Dendritic cell treated with granulocyte-macrophage colony-stimulating factor and Interleukin-4, amounts not matched to agents 40 ng/mL and 50 ng/mL, for 4 days (primary cell): ENCODE measurements at regions of chr2 and their contacts with region 1.

Region 1: GRCh38 chr2:229330952-229331351 is 59.9 kb upstream of the PID1 start:
- H3K4me3 Mint-ChIP-seq: peak overlapping the region; percentile 17
- H3K27ac Mint-ChIP-seq: peak overlapping the region; percentile 65
- H3K4me1 Mint-ChIP-seq: peaks cover 51% of the 10 kb centered on the region
- H3K27me3 Mint-ChIP-seq: peaks cover 18% of the 10 kb centered on the region

Region 2: GRCh38 chr2:229275506-229275905 is 55.4 kb before region 1 on chr2:
- intact Hi-C with region 1: loop called (anchors 5 kb)
- H3K4me3 Mint-ChIP-seq: no peak overlapping the region
- H3K27ac Mint-ChIP-seq: no peak overlapping the region
- H3K4me1 Mint-ChIP-seq: peaks cover 34% of the 10 kb centered on the region
- H3K27me3 Mint-ChIP-seq: peaks cover 44% of the 10 kb centered on the region

Region 3: DNA sequence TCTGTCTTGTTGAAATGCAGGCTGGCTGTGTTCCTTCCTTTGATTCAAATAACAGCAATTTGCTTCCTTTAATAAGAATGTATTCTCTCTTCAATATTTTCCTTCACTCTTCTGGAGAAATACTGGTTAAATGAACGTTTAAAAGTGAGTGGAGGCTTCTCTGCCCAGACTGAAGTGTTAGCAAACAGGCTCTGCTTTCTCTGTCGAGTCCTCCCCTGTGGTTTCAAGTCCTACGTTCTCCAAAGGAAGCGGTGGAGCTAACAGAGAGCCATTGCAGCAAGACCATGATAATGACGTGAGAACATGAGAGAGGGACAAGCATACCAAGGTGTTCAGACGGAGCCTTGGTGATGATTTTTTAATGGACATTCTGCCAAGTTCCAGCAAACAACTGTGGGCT is 33.7 kb before region 1 on chr2:
- intact Hi-C with region 1: loop called (anchors 5 kb)
- H3K4me3 Mint-ChIP-seq: no peak overlapping the region
- H3K27ac Mint-ChIP-seq: no peak overlapping the region
- H3K4me1 Mint-ChIP-seq: peaks cover 51% of the 10 kb centered on the region
- H3K27me3 Mint-ChIP-seq: peaks cover 11% of the 10 kb centered on the region

Region 4: DNA sequence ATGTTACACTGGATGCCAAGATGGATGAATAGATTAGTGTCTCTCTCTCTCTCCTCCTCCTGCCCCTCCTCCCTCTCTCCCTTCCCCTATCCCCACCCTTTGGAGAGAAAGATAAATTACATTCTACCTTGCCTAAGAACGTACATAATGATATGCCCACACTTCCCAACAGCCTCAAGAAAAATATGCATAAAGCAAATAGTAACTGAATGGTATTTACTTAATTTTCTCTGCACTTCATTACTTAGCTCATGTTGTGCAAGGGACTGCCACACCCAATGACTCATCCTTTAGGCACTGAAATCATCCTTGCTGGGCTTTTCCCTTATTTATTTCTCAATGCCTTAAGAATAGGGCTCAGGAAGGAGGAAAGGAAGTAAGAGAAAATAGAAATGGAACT is 77.4 kb after region 1 on chr2:
- intact Hi-C with region 1: loop called (anchors 2 kb)
- H3K4me3 Mint-ChIP-seq: no peak overlapping the region
- H3K27ac Mint-ChIP-seq: peak overlapping the region; percentile 78
- H3K4me1 Mint-ChIP-seq: peaks cover 50% of the 10 kb centered on the region
- H3K27me3 Mint-ChIP-seq: peaks cover 11% of the 10 kb centered on the region

Region 5: DNA sequence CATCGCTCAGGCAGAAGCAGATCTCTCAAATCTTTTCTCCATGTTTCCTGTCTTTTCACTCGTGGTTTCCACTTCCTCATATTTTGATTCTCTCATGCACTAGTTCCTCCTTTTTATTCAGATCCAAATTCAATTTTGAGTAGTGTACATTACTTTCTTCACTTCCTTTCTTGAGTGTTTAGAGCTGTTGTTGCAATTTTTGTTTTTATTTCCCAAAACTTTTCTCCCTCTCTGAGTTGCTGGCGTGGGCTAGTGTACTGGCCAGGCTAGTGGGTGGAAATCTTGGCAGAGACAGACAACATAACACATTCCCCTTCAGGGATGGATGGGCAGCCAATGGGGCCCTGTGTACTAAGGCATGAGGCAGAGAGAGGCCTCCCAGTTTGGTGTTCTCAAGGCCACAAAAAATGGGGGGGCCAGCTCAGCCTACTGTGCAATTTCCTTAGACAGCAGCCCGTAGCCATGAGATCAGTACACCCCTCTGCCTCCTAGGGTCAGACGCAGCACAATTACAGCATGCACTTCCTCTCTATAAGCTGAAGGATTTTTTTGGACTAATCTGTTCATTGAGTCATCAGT is 85.3 kb after region 1 on chr2:
- intact Hi-C with region 1: loop called (anchors 2 kb)
- H3K4me3 Mint-ChIP-seq: peak overlapping the region; percentile 20
- H3K27ac Mint-ChIP-seq: peak overlapping the region; percentile 83
- H3K4me1 Mint-ChIP-seq: peaks cover 56% of the 10 kb centered on the region
- H3K27me3 Mint-ChIP-seq: peaks cover 23% of the 10 kb centered on the region